WTC11 (cell line): ENCODE measurements at regions of chr1 and their contacts with region 1.

Region 1: GRCh38 chr1:212665241-212666115 is 34.2 kb downstream of the BATF3 start:
- DNase-seq: peak; percentile 93
- ATAC-seq: peak; percentile 94
- H3K4me3 Mint-ChIP-seq: peak overlapping the region; percentile 81
- H3K27ac Mint-ChIP-seq: no peak overlapping the region
- H3K4me1 Mint-ChIP-seq: peaks cover 19% of the 10 kb centered on the region
- H3K27me3 Mint-ChIP-seq: peaks cover 31% of the 10 kb centered on the region
- CTCF ChIP-seq: peak; percentile 81

Region 2: GRCh38 chr1:212477014-212477679 is 188.3 kb before region 1 on chr1:
- CTCF ChIA-PET with region 1: interaction called, 47 read pairs
- POLR2A ChIA-PET with region 1: no interaction called
- DNase-seq: peak; percentile 88
- ATAC-seq: peak; percentile 96
- H3K4me3 Mint-ChIP-seq: no peak overlapping the region
- H3K27ac Mint-ChIP-seq: no peak overlapping the region
- H3K4me1 Mint-ChIP-seq: peaks cover 16% of the 10 kb centered on the region
- H3K27me3 Mint-ChIP-seq: no peaks in the 10 kb centered on the region
- CTCF ChIP-seq: peak; percentile 70

Region 3: GRCh38 chr1:212574732-212575131 is 90.7 kb before region 1 on chr1:
- CTCF ChIA-PET with region 1: no interaction called
- POLR2A ChIA-PET with region 1: no interaction called
- DNase-seq: no peak
- ATAC-seq: no peak
- H3K4me3 Mint-ChIP-seq: no peak overlapping the region
- H3K27ac Mint-ChIP-seq: no peak overlapping the region
- H3K4me1 Mint-ChIP-seq: no peaks in the 10 kb centered on the region
- H3K27me3 Mint-ChIP-seq: no peaks in the 10 kb centered on the region
- CTCF ChIP-seq: no peak

Region 4: DNA sequence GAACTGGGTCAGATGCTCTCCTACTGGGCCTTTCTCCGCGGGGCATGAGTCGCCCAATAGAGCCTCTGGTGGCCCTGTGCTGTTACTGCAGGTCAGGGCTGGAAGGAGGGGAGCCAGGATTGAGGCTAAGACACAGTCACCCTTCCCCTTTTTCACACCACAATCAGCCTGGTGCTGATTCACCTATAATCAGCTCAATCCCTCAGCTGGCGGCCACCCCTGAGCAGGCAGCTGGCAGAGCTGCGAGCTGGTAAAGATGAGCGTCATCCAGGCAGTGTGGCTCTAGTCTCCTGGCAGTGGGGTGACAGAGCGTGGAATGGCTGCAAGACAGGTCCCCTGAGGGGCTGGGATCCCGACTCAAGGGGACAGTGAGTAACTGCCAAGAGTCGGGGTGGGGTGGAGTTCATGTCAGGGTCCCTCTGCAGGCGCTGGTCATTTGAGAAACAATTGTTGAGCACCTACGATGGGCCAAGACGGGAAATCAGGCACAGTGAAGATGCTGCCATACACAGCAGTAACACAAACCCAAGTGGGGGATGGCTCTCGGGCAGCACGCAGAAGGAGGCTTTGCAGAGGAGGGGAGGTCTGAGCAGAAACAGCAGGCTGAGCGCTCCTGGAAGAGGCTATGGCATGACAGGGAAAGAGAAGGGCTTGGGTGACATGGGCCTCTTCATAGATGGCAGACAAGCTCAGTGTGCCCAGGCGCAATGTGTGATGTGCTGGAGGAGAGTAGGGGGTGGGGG is 35.1 kb before region 1 on chr1:
- CTCF ChIA-PET with region 1: interaction called, 12 read pairs
- POLR2A ChIA-PET with region 1: no interaction called
- DNase-seq: peak; percentile 73
- ATAC-seq: peak; percentile 99
- H3K4me3 Mint-ChIP-seq: no peak overlapping the region
- H3K27ac Mint-ChIP-seq: no peak overlapping the region
- H3K4me1 Mint-ChIP-seq: no peaks in the 10 kb centered on the region
- H3K27me3 Mint-ChIP-seq: peaks cover 4% of the 10 kb centered on the region
- CTCF ChIP-seq: peak; percentile 87

Region 5: DNA sequence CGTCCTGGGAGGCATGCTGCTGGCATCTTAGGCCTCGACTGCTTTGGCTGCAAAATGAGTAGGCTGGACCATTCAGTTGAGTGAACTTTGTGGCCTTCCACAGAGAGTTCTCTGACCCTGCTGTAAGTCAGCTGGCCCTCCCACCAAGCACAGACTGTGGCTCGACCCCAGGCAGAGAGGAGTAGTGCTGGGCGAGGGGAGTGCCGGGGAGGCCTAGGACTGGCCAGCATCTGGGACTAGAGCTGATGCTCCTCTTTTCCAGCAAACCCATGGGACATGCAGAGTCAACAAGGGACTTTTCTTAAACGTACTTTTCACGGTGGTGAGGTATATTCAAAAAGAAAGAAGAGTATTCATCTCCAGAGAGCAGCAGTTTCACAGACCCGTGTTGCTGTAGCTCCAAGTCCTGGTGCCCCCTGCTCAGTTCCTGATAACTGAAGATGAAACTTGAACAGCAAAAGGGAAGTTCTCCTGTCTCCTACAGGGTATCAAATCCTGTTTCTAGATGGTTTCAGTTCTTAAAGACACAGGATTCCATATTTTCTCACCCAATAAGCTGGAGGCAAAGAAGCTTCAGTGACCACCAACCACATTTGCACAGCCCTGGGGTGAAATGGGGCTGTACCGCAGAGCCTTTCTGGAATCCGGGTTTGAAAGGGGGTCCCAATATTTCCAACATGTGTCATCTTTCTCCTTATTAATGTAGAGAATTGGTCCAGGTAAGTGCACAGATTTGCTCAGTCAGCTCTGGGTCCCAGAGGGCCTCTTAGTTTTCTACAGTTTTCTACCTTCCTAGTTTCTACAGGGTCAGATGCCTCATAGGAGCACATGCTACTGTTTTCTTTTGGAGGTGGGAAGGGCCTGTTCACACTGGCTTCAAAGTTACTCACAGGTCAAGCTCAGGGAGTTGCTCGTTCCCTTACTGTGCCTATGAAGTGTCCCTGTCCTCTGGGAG is 13.3 kb after region 1 on chr1:
- CTCF ChIA-PET with region 1: interaction called, 44 read pairs
- POLR2A ChIA-PET with region 1: no interaction called
- DNase-seq: no peak
- ATAC-seq: peak; percentile 35
- H3K4me3 Mint-ChIP-seq: no peak overlapping the region
- H3K27ac Mint-ChIP-seq: no peak overlapping the region
- H3K4me1 Mint-ChIP-seq: peaks cover 11% of the 10 kb centered on the region
- H3K27me3 Mint-ChIP-seq: peaks cover 5% of the 10 kb centered on the region; the same call in 1 of the 2 replicates
- CTCF ChIP-seq: no peak

Region 6: DNA sequence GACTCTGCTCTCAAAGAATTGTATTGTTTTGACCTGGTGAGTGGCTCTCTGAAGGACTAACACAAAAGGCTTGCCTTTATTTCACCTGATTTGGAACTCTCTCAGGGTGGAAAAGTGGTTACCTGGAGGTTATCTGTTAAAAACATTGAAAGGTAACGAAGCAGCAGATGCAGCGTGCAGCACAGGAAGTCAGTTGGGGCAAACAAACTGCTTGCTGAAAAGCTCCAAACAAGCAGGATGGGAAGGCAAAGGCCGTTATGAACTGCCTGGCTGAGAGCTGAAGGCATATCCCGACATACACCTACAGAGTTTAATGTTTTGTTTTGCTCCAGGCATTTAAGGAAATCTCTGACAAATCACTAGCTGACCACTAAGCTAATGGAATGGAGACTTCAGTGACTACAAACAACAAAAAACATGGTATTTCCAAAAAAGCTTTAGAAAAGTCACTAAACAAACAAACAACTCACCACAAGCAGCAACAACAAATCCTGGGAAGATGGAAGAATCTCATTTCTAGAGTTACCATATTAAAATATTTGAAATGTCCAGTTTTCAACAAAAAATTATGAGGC is 78.5 kb after region 1 on chr1:
- CTCF ChIA-PET with region 1: interaction called, 41 read pairs
- POLR2A ChIA-PET with region 1: no interaction called
- DNase-seq: no peak
- ATAC-seq: no peak
- H3K4me3 Mint-ChIP-seq: no peak overlapping the region
- H3K27ac Mint-ChIP-seq: peak overlapping the region; percentile 67
- H3K4me1 Mint-ChIP-seq: peaks cover 11% of the 10 kb centered on the region
- H3K27me3 Mint-ChIP-seq: no peaks in the 10 kb centered on the region
- CTCF ChIP-seq: no peak